ENCODE measurements at regions of chr12 and their contacts with region 1.

Region 1: DNA sequence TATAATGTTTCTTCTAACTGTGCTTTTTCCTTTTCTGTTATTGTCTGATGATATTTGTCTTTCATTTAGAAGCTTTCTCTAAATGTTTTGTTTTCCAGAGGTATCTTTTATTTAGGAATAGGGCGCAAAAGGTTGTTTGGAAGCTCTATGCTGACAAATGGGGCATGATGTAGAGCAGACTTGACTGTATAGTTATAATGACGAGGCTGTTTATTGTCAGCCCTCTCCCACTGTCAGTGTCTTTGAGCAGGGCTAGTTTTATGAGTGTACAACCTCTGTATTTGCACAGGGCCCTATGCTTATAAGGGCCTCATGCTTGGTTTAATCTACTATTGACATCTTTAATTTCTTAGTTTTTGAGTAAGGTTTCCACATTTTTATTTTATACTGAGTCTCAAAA is 158.9 kb downstream of the CCDC91 start:
- DNase-seq: no peak
- H3K4me3 ChIP-seq: no peak overlapping the region
- H3K27ac ChIP-seq: no peak overlapping the region
- H3K4me1 ChIP-seq: no peaks in the 10 kb centered on the region
- H3K27me3 ChIP-seq: no peaks in the 10 kb centered on the region
- CTCF ChIP-seq: no peak
- POLR2A ChIP-seq: no peak

Region 2: GRCh38 chr12:27277846-27278260 is 1071.3 kb before region 1 on chr12:
- intact Hi-C with region 1: no loop called
- DNase-seq: no peak
- H3K4me3 ChIP-seq: no peak overlapping the region
- H3K27ac ChIP-seq: peak overlapping the region in 1 of 2 donors; percentile 13
- H3K4me1 ChIP-seq: peaks cover 0 to 5% of the 10 kb centered on the region in 2 donors
- H3K27me3 ChIP-seq: no peaks in the 10 kb centered on the region
- CTCF ChIP-seq: no peak
- POLR2A ChIP-seq: no peak

Region 3: GRCh38 chr12:28017126-28017872 is 331.9 kb before region 1 on chr12:
- intact Hi-C with region 1: no loop called
- DNase-seq: no peak
- H3K4me3 ChIP-seq: no peak overlapping the region
- H3K27ac ChIP-seq: no peak overlapping the region
- H3K4me1 ChIP-seq: no peaks in the 10 kb centered on the region
- H3K27me3 ChIP-seq: no peaks in the 10 kb centered on the region
- CTCF ChIP-seq: no peak
- POLR2A ChIP-seq: no peak

Region 4: GRCh38 chr12:28242496-28243309 is 106.5 kb before region 1 on chr12:
- intact Hi-C with region 1: no loop called
- DNase-seq: no peak
- H3K4me3 ChIP-seq: no peak overlapping the region
- H3K27ac ChIP-seq: no peak overlapping the region
- H3K4me1 ChIP-seq: no peaks in the 10 kb centered on the region
- H3K27me3 ChIP-seq: no peaks in the 10 kb centered on the region
- CTCF ChIP-seq: no peak
- POLR2A ChIP-seq: no peak

Region 5: DNA sequence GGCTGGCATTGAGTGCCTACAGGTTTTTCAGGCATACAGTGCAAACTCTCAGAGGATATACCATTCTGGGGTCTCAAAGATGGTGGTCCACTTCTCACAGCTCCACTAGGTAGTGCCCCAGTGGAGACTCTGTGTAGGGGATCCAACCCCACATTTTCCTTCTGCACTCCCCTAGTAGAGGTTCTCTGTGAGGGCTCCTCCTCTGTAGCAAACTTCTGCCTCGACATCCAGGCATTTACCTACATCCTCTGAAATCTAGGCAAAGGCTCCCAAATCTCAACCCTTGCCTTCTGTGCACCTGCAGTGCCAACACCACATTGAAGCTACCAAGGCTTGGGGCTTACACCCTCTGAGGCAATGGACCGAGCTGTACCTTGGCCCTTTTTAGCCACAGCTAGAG is 20.3 kb after region 1 on chr12:
- intact Hi-C with region 1: loop called (anchors 2 kb)
- DNase-seq: no peak
- H3K4me3 ChIP-seq: no peak overlapping the region
- H3K27ac ChIP-seq: no peak overlapping the region
- H3K4me1 ChIP-seq: no peaks in the 10 kb centered on the region
- H3K27me3 ChIP-seq: no peaks in the 10 kb centered on the region
- CTCF ChIP-seq: no peak
- POLR2A ChIP-seq: no peak

Region 6: DNA sequence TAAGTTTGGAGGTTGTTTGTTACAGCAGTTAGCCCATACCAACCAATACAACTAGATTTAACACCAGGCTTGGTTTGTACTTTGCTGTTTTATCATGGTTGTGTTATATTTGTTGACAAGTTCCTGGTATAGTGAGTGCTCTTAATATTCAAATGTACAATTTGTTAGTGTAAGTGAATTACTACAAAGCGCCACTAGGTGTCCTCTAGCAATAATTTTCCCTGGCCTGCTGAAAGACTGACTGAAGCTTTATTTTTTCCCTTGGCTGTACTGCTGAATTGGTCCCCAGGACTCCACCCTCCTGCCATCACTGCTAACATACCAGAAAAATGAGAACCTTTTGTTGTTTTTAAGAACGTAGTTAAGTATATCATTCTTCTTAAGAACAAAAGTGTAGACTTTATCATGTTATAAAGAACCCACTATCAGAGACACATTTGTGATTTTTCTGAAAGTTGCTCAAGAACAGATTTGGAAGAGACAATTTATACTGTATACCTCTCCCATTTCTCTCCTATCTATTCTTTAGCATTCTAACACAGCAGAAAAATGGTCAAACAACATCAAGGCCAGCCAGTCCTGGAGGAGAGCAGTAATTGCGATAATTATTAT is 724.5 kb after region 1 on chr12:
- intact Hi-C with region 1: no loop called
- DNase-seq: no peak
- H3K4me3 ChIP-seq: no peak overlapping the region
- H3K27ac ChIP-seq: no peak overlapping the region
- H3K4me1 ChIP-seq: no peaks in the 10 kb centered on the region
- H3K27me3 ChIP-seq: no peaks in the 10 kb centered on the region
- CTCF ChIP-seq: peak; percentile 51 to 76 (median 60)
- POLR2A ChIP-seq: no peak

Measured in breast epithelium (tissue), 4 donors.